CD4-positive, alpha-beta memory T cell (primary cell): ENCODE measurements at regions of chr15 and their contacts with region 1.

Region 1: GRCh38 chr15:38652998-38653397 is 88.4 kb upstream of the RASGRP1 start:
- DNase-seq: peak; percentile 91 to 94 (median 91)
- H3K4me3 ChIP-seq: peak overlapping the region; percentile 11 to 37
- H3K4me3 Mint-ChIP-seq: peak overlapping the region; percentile 82 to 91 (median 86)
- H3K27ac ChIP-seq: peak overlapping the region; percentile 59
- H3K27ac Mint-ChIP-seq: peak overlapping the region; percentile 93 to 98 (median 96)
- H3K4me1 ChIP-seq: peaks cover 87% of the 10 kb centered on the region
- H3K4me1 Mint-ChIP-seq: peaks cover 61 to 83% (median 70%) of the 10 kb centered on the region in 4 donors
- H3K27me3 ChIP-seq: no peaks in the 10 kb centered on the region
- H3K27me3 Mint-ChIP-seq: no peaks in the 10 kb centered on the region

Region 2: GRCh38 chr15:38453971-38454695 is 198.9 kb before region 1 on chr15 and contains the start of gene FAM98B:
- CTCF ChIA-PET with region 1: no interaction called
- POLR2A ChIA-PET with region 1: interaction called, 10 read pairs
- intact Hi-C with region 1: no loop called
- DNase-seq: peak; percentile 80 to 88 (median 84)
- H3K4me3 ChIP-seq: peak within 1 kb of the TSS; percentile 88 to 95
- H3K4me3 Mint-ChIP-seq: peak within 1 kb of the TSS; percentile 95 to 99 (median 97)
- H3K27ac ChIP-seq: peak within 1 kb of the TSS; percentile 74
- H3K27ac Mint-ChIP-seq: peak within 1 kb of the TSS; percentile 94 to 98 (median 96)
- H3K4me1 ChIP-seq: peaks cover 23% of the 10 kb centered on the region
- H3K4me1 Mint-ChIP-seq: peaks cover 26 to 39% (median 32%) of the 10 kb centered on the region in 4 donors
- H3K27me3 ChIP-seq: no peaks in the 10 kb centered on the region
- H3K27me3 Mint-ChIP-seq: no peaks in the 10 kb centered on the region
- total RNA-seq, gene FAM98B: 22.0 to 26.3 TPM

Region 3: GRCh38 chr15:38665586-38666305 is 12.7 kb after region 1 on chr15:
- CTCF ChIA-PET with region 1: interaction called, 133 read pairs
- POLR2A ChIA-PET with region 1: interaction called, 520 read pairs
- intact Hi-C with region 1: loop called (anchors 1 kb)
- DNase-seq: no peak
- H3K4me3 ChIP-seq: no peak overlapping the region
- H3K4me3 Mint-ChIP-seq: peak overlapping the region in 6 of 8 donors; percentile 3 to 71 (median 50)
- H3K27ac ChIP-seq: no peak overlapping the region
- H3K27ac Mint-ChIP-seq: peak overlapping the region; percentile 5 to 92 (median 79)
- H3K4me1 ChIP-seq: peaks cover 79% of the 10 kb centered on the region
- H3K4me1 Mint-ChIP-seq: peaks cover 51 to 84% (median 69%) of the 10 kb centered on the region in 4 donors
- H3K27me3 ChIP-seq: no peaks in the 10 kb centered on the region
- H3K27me3 Mint-ChIP-seq: no peaks in the 10 kb centered on the region

Region 4: GRCh38 chr15:38671675-38672254 is 18.8 kb after region 1 on chr15:
- CTCF ChIA-PET with region 1: interaction called, 133 read pairs
- POLR2A ChIA-PET with region 1: interaction called, 520 read pairs
- intact Hi-C with region 1: loop called (anchors 1 kb)
- DNase-seq: peak; percentile 70 to 87 (median 78)
- H3K4me3 ChIP-seq: peak overlapping the region; percentile 1 to 24
- H3K4me3 Mint-ChIP-seq: peak overlapping the region in 7 of 8 donors; percentile 67 to 79 (median 72)
- H3K27ac ChIP-seq: peak overlapping the region; percentile 89
- H3K27ac Mint-ChIP-seq: peak overlapping the region; percentile 94 to 100 (median 99)
- H3K4me1 ChIP-seq: peaks cover 83% of the 10 kb centered on the region
- H3K4me1 Mint-ChIP-seq: peaks cover 57 to 79% (median 64%) of the 10 kb centered on the region in 4 donors
- H3K27me3 ChIP-seq: no peaks in the 10 kb centered on the region
- H3K27me3 Mint-ChIP-seq: no peaks in the 10 kb centered on the region